Activated CD4-positive, alpha-beta T cell treated with anti-CD3 and anti-CD28 coated beads, Interleukin-2, amount 10 ng/mL, durations not matched to agents 24 days and 14 days (primary cell): ENCODE measurements at regions of chr5 and their contacts with region 1.

Region 1: GRCh38 chr5:77390795-77391194 is 101.3 kb downstream of the WDR41 start:
- DNase-seq: no peak
- H3K4me3 Mint-ChIP-seq: no peak overlapping the region
- H3K27ac Mint-ChIP-seq: no peak overlapping the region
- H3K4me1 Mint-ChIP-seq: no peaks in the 10 kb centered on the region
- H3K27me3 Mint-ChIP-seq: no peaks in the 10 kb centered on the region

Region 2: DNA sequence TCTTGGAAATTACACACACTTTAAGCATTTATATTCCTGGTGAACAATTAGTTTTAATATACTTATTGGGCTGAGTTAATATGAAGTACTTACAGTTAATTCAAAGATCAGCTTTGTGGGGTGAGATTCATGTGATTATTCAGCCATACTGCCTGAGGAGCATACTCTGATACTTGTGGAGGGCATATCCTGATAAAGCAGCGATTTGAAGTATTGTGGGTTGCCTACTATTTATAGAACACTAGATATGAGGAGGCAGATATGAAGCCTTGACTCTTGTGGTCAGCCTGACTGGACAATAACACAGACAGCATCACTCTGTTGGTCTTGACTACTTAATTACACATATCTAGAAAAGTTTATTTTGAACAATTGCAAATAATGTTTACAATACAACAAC is 387.5 kb before region 1 on chr5:
- intact Hi-C with region 1: no loop called
- DNase-seq: no peak
- H3K4me3 Mint-ChIP-seq: no peak overlapping the region
- H3K27ac Mint-ChIP-seq: no peak overlapping the region
- H3K4me1 Mint-ChIP-seq: no peaks in the 10 kb centered on the region
- H3K27me3 Mint-ChIP-seq: peaks cover 43% of the 10 kb centered on the region

Region 3: GRCh38 chr5:77356740-77357139 is 34.1 kb before region 1 on chr5:
- intact Hi-C with region 1: loop called (anchors 5 kb)
- DNase-seq: peak; percentile 77
- H3K4me3 Mint-ChIP-seq: no peak overlapping the region
- H3K27ac Mint-ChIP-seq: peak overlapping the region; percentile 13
- H3K4me1 Mint-ChIP-seq: peaks cover 17% of the 10 kb centered on the region
- H3K27me3 Mint-ChIP-seq: peaks cover 14% of the 10 kb centered on the region